ENCODE measurements at regions of chr1 and their contacts with region 1.

Region 1: DNA sequence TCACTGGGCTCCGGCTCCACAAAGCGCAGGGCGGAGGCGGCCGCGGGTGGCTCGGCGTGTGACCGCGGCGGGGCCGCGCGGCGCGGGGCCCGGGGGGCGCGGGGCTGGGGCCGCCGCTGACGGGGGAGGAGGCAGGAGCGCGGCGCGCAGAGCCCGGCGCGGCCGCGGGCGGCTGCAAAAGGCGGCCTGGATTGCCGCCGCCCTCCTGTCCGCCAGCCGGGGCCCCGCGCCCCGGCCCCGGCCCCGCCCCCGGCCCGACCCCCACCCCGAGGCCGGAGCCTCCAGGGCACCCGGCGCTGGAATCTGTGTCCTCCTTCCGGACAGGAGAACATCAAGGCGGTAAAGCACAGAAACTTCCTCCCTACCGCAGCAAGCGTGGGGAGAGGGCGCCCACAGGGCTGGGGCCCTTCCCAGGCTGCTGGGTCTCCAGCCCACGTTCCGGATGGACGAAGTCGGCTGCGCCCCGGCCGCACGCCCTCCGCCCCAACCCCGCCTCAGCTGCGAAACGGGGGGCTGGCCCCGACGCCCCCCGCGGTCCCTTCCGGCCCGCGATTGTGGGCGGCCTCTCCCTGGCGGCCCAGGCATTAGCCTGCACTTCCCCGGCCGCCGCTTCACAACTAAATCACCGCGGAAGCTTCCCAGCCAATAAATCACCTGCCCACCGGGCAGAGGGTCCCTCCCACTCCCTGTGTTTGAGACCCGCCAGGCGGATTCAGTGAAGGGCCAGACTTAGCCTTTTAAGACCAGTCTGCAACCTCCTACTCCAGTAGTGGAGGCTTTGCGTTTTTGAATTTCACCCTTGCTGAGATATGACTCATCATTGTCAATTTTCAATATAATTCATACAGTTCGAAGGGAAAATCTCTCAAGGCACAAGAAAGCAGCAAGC is 106.0 kb downstream of the SLC45A1 start:
- DNase-seq: peak in 1 of 2 donors; percentile 83
- H3K4me3 ChIP-seq: peak overlapping the region; percentile 66 to 97
- H3K27ac ChIP-seq: peak overlapping the region; percentile 96 to 99
- H3K4me1 ChIP-seq: peaks cover 6 to 32% of the 10 kb centered on the region in 2 donors
- H3K27me3 ChIP-seq: no peaks in the 10 kb centered on the region
- CTCF ChIP-seq: peak in 1 of 3 experiments; percentile 6

Region 2: GRCh38 chr1:8137481-8138244 is 286.2 kb before region 1 on chr1:
- intact Hi-C with region 1: no loop called
- DNase-seq: peak; percentile 32 to 85
- H3K4me3 ChIP-seq: peak overlapping the region in 1 of 2 donors; percentile 25
- H3K27ac ChIP-seq: peak overlapping the region; percentile 81 to 95
- H3K4me1 ChIP-seq: peaks cover 19 to 35% of the 10 kb centered on the region in 2 donors
- H3K27me3 ChIP-seq: no peaks in the 10 kb centered on the region
- CTCF ChIP-seq: no peak

Region 3: GRCh38 chr1:8374812-8375211 is 49.1 kb before region 1 on chr1:
- intact Hi-C with region 1: loop called (anchors 5 kb)
- DNase-seq: no peak
- H3K4me3 ChIP-seq: no peak overlapping the region
- H3K27ac ChIP-seq: peak overlapping the region; percentile 88 to 91
- H3K4me1 ChIP-seq: peaks cover 26 to 68% of the 10 kb centered on the region in 2 donors
- H3K27me3 ChIP-seq: no peaks in the 10 kb centered on the region
- CTCF ChIP-seq: peak in 2 of 3 experiments; percentile 11 to 23

Region 4: DNA sequence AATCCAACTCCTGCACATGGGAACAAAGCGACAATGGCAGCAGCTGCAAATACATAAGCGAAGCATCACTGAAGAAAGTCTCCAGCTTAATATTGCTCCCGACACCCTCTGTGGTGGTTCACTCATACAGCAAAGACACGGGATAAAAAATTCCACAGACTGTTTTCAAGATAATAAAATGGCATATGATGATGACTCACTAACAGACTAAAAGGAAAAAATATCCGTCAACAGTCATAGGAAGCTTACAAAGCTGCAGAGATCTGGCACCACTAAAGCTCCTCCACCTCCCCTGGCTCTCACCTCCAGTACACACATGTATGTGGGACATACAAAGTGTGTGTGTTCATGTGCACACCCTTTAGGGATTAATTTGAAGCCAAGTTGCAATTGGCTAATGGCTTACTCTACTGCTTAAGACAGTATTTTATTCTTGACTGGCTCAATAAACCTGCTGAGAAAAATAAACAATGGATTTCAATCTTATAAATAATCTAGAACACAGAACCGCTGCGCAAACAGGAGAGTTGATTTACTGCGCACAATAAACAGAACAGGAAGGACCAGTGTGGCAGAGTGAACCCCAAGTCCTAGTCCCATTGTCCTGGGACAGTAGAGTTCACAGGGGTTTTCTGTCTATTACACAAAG is 11.6 kb before region 1 on chr1:
- intact Hi-C with region 1: loop called (anchors 1 kb)
- DNase-seq: peak in 1 of 2 donors; percentile 74
- H3K4me3 ChIP-seq: peak overlapping the region; percentile 23 to 30
- H3K27ac ChIP-seq: peak overlapping the region; percentile 38 to 77
- H3K4me1 ChIP-seq: peaks cover 21 to 92% of the 10 kb centered on the region in 2 donors
- H3K27me3 ChIP-seq: no peaks in the 10 kb centered on the region
- CTCF ChIP-seq: no peak

Region 5: DNA sequence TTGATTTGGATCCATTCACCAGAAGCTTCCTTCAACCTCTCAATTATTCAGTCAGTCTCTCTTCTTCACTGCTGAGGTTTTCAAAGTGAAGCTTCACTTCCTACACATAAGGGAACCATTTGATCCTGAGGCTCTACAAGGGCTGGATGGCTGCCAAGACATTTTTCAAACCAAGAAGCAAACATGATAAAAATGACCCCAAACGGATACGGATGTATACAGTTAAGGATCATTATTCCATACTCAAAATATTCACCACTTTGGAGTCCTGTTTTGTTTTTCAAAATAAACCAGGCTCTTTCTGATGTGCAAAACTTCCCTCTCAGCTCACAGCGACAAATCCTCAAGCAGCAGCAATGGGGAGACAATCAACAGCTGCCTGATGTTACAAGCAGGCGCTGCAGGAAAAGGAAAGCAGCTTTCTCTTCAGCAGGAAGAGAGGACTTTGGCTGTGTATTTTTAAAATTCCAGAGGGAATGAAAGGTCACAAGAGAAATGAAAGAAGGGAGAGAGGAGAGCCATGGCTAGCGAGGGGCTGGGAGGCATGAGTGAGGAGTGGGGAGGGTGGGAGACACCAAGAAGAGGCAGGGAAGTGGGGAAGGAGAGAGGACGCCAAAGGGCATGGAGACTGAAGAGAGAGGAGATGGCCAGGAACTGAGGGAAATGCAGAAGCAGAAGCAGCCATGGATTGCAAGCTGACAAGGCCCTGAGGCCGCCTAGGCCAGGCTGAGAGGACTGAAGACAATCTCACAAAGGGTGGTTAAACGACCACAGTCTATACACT is 39.4 kb after region 1 on chr1:
- intact Hi-C with region 1: loop called (anchors 5 kb)
- DNase-seq: no peak
- H3K4me3 ChIP-seq: peak overlapping the region in 1 of 2 donors; percentile 49
- H3K27ac ChIP-seq: peak overlapping the region; percentile 71 to 83
- H3K4me1 ChIP-seq: peaks cover 0 to 17% of the 10 kb centered on the region in 2 donors
- H3K27me3 ChIP-seq: no peaks in the 10 kb centered on the region
- CTCF ChIP-seq: no peak

Region 6: DNA sequence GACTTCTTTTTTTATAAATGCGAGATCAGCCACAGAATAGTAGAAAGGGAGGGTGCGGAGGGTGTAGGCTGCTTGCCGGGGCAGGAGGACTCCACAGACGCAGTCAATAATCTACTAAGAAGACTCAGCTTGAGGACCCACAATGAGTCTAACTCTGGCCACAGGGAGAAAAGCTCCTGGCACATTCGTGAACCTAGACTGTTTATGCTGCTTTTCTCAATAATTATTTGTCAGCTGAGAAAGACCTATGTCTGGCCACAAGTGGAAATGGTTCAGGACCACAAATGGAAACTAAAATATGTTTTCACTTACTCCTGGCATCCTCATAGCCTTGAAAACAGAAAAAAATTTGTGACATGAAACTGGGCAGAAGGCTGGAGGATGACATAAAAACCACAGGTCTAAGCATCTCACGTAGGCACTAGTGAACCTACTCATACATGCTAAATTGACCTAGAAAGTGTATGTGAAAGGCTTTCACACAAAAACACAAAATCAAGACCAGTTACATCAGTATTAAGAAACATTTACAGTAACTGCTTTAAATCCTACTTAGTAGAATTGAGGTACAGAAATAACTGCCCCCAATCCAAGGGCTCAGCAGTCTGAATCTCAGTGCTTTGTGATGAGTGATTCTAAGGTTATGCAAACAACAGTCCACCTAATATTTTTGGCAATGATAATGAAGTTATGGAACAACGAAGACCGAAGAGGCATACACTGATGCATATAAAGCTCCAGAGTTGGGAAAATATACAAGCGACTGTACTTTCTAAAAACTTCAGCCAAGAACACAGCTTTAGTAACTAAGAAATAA is 53.5 kb after region 1 on chr1:
- intact Hi-C with region 1: no loop called
- DNase-seq: no peak
- H3K4me3 ChIP-seq: peak overlapping the region in 1 of 2 donors; percentile 31
- H3K27ac ChIP-seq: peak overlapping the region; percentile 39 to 58
- H3K4me1 ChIP-seq: peaks cover 0 to 19% of the 10 kb centered on the region in 2 donors
- H3K27me3 ChIP-seq: no peaks in the 10 kb centered on the region
- CTCF ChIP-seq: no peak

Region 7: DNA sequence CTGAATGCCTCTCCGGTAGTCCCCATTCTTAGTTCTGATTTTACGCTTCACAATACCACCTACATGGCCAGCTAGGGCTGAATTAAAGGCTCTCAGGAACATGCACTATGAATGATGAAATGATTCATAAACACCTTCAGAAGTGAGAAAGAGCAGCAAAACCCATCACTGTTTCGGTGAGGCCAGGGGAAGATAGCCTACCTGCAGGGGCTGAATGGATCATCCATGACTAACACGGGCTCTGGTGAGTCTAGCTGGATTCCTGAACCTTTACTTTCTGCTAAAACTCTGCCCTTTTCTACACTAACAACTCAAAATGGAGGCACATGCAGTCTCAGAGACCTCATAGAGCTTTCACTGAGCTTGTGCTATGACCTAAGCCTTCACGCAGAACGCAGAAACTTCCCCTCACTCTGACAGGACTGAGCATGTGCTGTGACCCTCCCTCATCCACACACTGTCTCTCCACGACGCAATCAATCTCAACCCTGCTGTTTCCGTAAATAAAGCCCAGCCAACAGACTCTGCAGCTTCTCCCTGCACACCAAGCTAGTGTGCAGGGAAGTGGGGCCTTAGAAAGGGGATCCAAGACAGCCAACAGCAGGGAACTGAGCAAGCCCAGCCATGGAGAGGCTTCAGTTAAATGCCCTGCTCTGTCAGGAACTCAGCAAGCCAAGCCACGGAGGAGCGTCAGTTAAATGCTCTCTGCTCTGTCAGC is 101.8 kb after region 1 on chr1:
- intact Hi-C with region 1: loop called (anchors 5 kb)
- DNase-seq: peak; percentile 72 to 92
- H3K4me3 ChIP-seq: peak overlapping the region; percentile 49 to 73
- H3K27ac ChIP-seq: peak overlapping the region; percentile 81 to 88
- H3K4me1 ChIP-seq: peaks cover 0 to 11% of the 10 kb centered on the region in 2 donors
- H3K27me3 ChIP-seq: no peaks in the 10 kb centered on the region
- CTCF ChIP-seq: no peak

Region 8: DNA sequence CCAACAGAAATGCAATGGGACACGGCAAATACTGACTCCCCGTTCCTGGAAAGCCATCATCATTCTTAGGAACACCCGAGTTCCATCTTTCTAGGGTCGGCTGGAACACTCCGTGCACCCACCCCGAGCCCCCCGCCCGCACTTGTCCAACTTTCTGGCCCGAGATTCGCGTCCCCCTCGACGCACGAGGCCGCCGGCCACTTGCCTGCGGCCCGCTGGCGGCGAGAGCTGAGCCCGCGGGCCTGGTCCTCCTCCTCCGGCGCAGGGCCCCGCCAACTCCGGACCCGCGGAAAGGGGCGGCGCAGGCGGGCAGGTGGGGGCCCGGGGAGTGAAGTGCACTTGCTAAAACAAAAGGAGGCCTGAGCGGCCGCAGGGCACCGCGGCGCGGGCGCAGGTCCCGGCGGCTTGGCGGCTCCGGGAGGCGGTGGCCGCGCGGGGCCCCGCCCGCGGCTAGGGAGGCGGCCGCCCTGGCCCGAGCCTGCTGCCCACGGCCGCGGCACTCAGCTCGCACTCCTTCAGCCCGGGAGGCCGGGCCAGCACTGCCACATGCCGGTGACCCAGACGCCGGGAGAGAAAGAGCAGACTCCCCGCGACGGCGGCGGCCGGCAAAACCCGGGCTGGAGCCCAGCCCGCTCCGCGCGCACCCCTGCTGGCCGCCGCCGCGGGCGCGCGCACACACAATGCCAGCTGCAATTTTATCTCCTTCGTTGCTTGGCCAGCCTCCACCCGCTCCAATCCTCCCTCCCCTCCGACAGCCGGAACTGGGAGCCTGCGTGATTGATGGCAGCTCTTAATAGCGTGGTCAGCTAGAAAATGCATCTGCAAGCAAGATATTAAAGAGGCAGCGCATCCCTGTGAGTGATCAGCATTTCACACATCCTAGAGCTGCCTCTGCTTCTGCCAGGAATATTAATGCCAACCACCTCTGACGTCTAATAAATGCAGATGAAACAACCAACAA is 279.2 kb after region 1 on chr1:
- intact Hi-C with region 1: loop called (anchors 2 kb)
- DNase-seq: peak; percentile 57 to 92
- H3K4me3 ChIP-seq: peak overlapping the region; percentile 65 to 95
- H3K27ac ChIP-seq: peak overlapping the region; percentile 76 to 93
- H3K4me1 ChIP-seq: peaks cover 0 to 9% of the 10 kb centered on the region in 2 donors
- H3K27me3 ChIP-seq: no peaks in the 10 kb centered on the region
- CTCF ChIP-seq: peak in 1 of 3 experiments; percentile 39

Measured in ascending aorta (tissue), 2 donors.